A673 (cell line): ENCODE measurements at regions of chr6 and their contacts with region 1.

Region 1: GRCh38 chr6:3929281-3929798 is 80.2 kb downstream of the FAM50B start:
- DNase-seq: no peak
- H3K4me3 ChIP-seq: no peak overlapping the region
- H3K27ac ChIP-seq: no peak overlapping the region
- H3K4me1 ChIP-seq: peaks cover 14% of the 10 kb centered on the region
- H3K27me3 ChIP-seq: no peaks in the 10 kb centered on the region
- CTCF ChIP-seq: no peak

Region 2: DNA sequence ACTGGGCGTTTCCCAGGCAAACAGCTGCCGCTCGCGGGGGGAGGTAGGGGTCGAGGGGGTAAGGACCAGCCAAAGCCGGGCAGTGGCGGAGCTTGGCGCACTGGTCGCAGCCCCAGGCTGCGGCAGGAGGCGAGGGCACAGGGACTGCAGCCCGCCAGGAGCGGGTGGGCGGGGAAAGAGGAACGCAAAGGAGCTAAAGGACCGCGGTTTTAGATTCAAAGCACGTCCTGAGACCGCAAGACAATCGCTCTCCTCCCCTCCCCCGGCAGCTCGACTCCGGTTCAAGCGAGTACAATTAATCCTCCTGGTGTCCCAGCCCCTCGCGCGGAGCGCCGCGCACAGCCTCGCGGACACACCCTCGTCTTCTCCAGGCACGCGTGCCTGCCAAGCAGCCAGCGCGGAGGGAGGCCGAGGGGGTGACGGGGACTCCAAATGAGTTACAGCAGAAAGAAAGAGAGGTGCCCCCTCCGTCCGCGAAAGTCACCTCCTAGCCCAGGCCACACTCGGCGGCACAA is 702.4 kb before region 1 on chr6:
- CTCF ChIA-PET with region 1: interaction called, 11 read pairs
- POLR2A ChIA-PET with region 1: no interaction called
- intact Hi-C with region 1: no loop called
- DNase-seq: peak; percentile 88
- H3K4me3 ChIP-seq: peak overlapping the region; percentile 85
- H3K27ac ChIP-seq: peak overlapping the region; percentile 83
- H3K4me1 ChIP-seq: peaks cover 23% of the 10 kb centered on the region
- H3K27me3 ChIP-seq: peaks cover 8% of the 10 kb centered on the region
- CTCF ChIP-seq: no peak

Region 3: GRCh38 chr6:3281631-3282475 is 647.5 kb before region 1 on chr6:
- CTCF ChIA-PET with region 1: interaction called, 3 read pairs
- POLR2A ChIA-PET with region 1: no interaction called
- intact Hi-C with region 1: loop called (anchors 5 kb)
- DNase-seq: peak; percentile 19
- H3K4me3 ChIP-seq: no peak overlapping the region
- H3K27ac ChIP-seq: peak overlapping the region; percentile 3
- H3K4me1 ChIP-seq: peaks cover 18% of the 10 kb centered on the region
- H3K27me3 ChIP-seq: no peaks in the 10 kb centered on the region
- CTCF ChIP-seq: no peak

Region 4: DNA sequence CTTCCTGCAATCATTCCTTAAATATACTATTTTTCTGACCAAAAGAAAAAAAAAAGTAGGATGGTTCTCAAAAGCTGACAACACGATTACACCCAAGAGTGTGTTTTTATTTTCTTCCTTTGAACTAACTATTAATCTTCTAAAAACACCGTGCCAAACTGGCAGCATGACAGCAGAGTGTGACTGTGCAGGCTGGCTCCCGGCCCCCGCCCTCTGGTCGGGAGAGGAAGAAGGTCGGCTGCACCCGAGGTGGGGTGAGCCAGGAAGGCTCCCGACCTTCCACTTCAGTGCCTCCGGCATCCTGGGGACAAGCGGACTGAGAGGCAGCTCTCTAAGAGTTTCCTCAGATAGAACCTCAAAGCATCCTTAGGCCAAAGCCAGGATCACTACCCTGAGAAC is 501.7 kb before region 1 on chr6:
- CTCF ChIA-PET with region 1: interaction called, 13 read pairs
- POLR2A ChIA-PET with region 1: no interaction called
- intact Hi-C with region 1: no loop called
- DNase-seq: no peak
- H3K4me3 ChIP-seq: no peak overlapping the region
- H3K27ac ChIP-seq: no peak overlapping the region
- H3K4me1 ChIP-seq: peaks cover 37% of the 10 kb centered on the region
- H3K27me3 ChIP-seq: no peaks in the 10 kb centered on the region
- CTCF ChIP-seq: no peak

Region 5: GRCh38 chr6:3650959-3651697 is 278.2 kb before region 1 on chr6:
- CTCF ChIA-PET with region 1: no interaction called
- POLR2A ChIA-PET with region 1: no interaction called
- intact Hi-C with region 1: no loop called
- DNase-seq: no peak
- H3K4me3 ChIP-seq: no peak overlapping the region
- H3K27ac ChIP-seq: no peak overlapping the region
- H3K4me1 ChIP-seq: no peaks in the 10 kb centered on the region
- H3K27me3 ChIP-seq: no peaks in the 10 kb centered on the region
- CTCF ChIP-seq: no peak

Region 6: DNA sequence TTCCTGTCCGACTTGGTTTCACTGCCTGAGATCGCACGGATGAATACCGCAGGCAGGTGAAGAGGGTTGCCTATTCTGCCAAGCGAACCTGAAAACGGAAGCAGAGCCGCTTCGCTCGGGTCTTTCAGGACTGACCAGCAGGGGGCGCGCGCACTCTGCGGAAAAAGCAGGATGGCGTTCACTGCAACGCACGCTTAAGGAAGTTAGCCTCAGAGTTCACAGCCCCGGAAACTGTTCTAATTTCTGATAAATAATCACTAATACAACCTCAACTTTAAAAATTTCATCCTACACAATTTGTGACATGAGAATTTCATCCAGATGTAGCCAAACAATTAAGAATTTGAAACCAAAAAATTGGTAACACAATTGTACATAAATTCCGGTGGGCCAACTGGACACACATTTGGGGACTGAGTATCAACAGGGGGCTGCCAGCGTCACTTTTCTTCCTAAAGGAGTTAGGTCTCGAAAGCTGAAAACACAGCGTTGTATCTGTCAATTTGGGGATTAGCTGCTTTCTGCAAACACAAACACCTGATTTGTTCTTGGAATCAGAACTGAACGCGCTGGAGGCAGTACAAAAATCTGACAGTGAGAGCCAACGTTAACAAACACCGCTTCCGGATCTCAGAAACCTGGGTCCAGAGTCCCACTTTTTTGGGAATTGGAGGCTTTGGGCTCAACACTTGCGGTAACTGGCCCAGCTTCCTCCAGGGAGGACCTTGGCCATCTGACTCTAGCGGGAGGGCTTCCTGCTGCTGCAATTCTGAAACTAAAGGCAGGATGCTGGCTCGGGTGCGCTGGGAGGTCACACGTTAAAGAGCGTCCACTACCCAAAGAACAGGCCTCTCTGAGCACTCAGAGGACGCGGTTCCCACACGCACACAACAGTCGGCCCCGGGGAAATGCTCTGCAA is 186.7 kb before region 1 on chr6:
- CTCF ChIA-PET with region 1: no interaction called
- POLR2A ChIA-PET with region 1: no interaction called
- intact Hi-C with region 1: loop called (anchors 1 kb)
- DNase-seq: peak; percentile 74
- H3K4me3 ChIP-seq: no peak overlapping the region
- H3K27ac ChIP-seq: peak overlapping the region; percentile 25
- H3K4me1 ChIP-seq: peaks cover 20% of the 10 kb centered on the region
- H3K27me3 ChIP-seq: no peaks in the 10 kb centered on the region
- CTCF ChIP-seq: peak; percentile 95

Region 7: DNA sequence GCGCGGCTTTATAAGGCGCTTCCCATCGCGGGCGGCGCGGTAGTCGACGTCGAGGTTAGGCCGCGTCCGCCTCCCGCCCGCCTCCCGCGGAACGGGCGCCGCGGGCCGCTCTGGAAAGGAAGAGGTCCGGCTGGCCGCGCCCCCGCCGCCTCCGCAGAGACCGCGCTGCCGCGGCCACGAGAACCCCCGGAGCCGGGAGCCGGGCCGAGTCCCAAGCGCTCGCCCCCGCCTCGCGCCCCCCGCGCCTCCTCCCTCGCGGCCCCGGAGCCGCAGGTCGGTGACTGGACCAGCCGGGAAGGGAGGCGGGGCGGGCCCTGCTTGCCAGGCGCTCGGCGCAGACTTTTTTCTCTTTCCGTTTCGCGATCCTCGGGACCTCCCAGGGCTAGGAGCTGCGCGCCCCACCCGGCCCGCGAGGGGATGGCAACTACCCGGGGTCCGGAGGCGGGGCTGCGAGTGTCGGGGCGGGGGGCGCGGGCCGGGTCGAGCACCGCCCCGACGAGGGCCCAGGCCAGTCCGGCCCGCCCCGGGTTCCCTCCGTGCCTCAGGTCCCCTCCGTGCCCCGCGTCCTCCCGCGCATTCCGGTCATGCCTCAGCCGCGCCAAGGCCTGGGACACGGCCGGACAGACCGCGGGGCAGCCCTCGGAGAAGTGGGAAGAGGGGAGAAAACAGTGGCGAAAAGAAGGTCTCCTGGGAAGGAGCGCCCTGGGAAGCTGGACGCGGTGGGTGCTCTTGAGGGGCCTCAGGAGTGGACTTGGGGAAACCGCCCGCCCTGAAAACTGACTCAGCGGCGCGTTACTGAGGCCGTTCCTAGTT is 177.4 kb before region 1 on chr6:
- CTCF ChIA-PET with region 1: interaction called, 10 read pairs
- POLR2A ChIA-PET with region 1: no interaction called
- intact Hi-C with region 1: no loop called
- DNase-seq: peak; percentile 88
- H3K4me3 ChIP-seq: peak overlapping the region; percentile 58
- H3K27ac ChIP-seq: peak overlapping the region; percentile 71
- H3K4me1 ChIP-seq: peaks cover 30% of the 10 kb centered on the region
- H3K27me3 ChIP-seq: no peaks in the 10 kb centered on the region
- CTCF ChIP-seq: peak; percentile 40

Region 8: DNA sequence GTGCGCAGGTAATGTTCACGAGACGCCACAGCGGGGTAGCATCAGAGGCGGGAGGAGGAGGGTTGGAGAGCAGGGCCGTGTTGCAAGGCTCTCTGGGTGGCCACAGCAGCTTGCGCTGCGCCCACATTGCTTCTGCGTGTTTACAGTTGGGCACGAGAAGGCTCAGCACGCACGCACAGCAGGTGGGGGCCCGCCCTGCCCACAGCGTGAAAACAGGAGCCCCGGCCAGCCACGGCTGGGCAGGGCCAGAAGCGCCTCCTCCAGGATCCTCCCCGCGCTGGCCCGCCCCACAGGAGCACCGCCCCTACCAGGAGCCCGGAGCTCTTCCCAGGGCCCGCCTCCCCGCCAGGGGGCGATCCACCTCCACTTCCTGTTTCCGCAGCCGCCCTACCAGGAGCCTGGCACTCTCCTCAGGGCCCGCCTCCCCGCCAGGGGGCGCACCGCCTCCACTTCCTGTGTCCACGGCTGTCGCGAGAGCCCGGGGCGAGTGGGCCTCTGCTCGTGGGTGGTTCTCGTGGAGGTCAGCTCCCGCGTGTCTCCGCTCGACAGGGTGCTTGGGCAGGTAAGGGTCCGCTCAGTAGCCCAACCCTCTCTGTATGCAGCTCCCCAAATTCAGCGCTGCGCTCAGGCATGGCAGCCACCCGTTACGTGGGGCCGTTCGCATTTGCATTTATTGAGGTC is 80.3 kb before region 1 on chr6 and contains the start of gene FAM50B:
- CTCF ChIA-PET with region 1: interaction called, 26 read pairs
- POLR2A ChIA-PET with region 1: no interaction called
- intact Hi-C with region 1: loop called (anchors 1 kb)
- DNase-seq: peak; percentile 91
- H3K4me3 ChIP-seq: peak within 1 kb of the TSS; percentile 68
- H3K27ac ChIP-seq: peak within 1 kb of the TSS; percentile 75
- H3K4me1 ChIP-seq: no peaks in the 10 kb centered on the region
- H3K27me3 ChIP-seq: no peaks in the 10 kb centered on the region
- CTCF ChIP-seq: peak; percentile 92
- total RNA-seq, gene FAM50B: 10.1 and 13.0 TPM in 2 replicates

Region 9: DNA sequence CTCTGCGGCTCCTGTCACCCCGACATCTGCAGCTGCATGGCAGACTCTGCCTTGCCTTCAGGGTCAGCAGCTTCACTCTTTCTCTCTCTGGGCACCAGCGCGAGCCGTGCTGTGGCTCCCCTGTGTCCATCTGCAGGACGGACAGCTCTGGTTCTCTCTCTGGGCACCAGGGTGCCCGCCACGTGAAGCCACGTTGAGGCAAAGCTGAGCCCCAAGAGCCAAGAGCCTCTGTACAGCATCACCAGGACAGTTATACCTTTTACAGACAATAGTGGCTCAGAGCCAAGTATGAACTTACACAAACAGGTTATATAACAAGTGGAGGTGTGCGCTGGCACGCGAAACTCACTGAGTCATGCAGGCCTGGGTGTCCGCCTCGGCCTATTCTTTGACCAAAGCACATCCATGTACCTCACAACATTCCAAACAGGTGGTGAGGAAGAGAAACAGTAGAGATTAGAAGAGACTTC is 29.3 kb before region 1 on chr6:
- CTCF ChIA-PET with region 1: no interaction called
- POLR2A ChIA-PET with region 1: no interaction called
- intact Hi-C with region 1: no loop called
- DNase-seq: no peak
- H3K4me3 ChIP-seq: no peak overlapping the region
- H3K27ac ChIP-seq: no peak overlapping the region
- H3K4me1 ChIP-seq: no peaks in the 10 kb centered on the region
- H3K27me3 ChIP-seq: no peaks in the 10 kb centered on the region
- CTCF ChIP-seq: no peak